ENCODE measurements at regions of chr5 and their contacts with region 1.

Region 1: DNA sequence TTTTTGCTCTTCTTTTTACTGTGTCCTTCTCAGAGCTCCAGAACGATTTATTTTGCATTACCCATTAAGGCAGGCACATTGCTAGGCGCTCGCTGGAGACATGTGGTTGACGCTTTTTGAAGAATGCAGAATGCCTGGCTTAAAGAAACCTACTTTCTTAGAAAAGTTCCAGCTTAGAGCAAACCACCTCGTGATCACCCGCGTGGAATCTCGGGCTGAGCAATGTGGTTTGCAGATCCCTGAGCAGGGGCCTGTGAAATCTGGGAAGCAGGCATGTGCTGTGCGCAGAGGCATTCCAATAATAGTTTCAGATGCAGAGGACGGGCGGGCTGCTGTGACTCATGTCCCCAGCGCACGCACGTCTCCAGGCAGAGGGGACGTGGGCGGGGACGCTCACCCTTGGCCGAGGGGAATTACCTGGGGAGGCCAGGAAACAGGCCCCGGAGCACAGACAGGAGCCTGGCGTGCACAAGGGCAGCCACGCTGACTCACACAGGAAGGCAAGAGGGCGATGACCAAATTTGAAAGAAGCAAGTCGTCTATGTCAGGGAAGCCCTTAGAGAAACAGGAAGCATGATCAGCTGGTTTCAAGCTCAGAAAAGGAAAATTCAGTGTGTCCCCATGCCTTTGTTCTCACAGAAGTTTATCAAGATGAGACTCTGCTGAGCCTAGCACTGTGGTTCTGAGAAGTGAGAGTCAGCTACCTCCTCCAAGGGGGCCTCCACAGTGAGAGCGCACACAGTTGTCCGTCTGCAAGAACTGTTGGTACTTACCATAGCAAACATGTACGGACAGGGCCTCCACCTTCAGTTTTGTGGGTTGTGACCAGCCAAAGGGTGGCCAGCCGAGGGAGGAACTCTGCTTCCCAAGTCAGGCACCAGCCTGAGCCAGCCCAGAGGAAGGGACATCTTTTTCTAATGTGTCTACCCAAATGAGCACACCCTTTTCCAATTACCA is 218.6 kb downstream of the PIK3R1 start:
- DNase-seq: peak; percentile 84
- H3K4me3 Mint-ChIP-seq: peak overlapping the region; percentile 39
- H3K27ac Mint-ChIP-seq: peak overlapping the region; percentile 64
- H3K4me1 Mint-ChIP-seq: peaks cover 45% of the 10 kb centered on the region
- H3K27me3 Mint-ChIP-seq: peaks cover 16% of the 10 kb centered on the region

Region 2: GRCh38 chr5:67215583-67216471 is 1218.4 kb before region 1 on chr5:
- intact Hi-C with region 1: loop called (anchors 5 kb)
- DNase-seq: peak; percentile 75
- H3K4me3 Mint-ChIP-seq: peak overlapping the region; percentile 73
- H3K27ac Mint-ChIP-seq: peak overlapping the region; percentile 97
- H3K4me1 Mint-ChIP-seq: peaks cover 55% of the 10 kb centered on the region
- H3K27me3 Mint-ChIP-seq: no peaks in the 10 kb centered on the region

Region 3: GRCh38 chr5:68287976-68288706 is 146.1 kb before region 1 on chr5:
- intact Hi-C with region 1: loop called (anchors 1 kb)
- DNase-seq: peak; percentile 42
- H3K4me3 Mint-ChIP-seq: peak overlapping the region; percentile 86
- H3K27ac Mint-ChIP-seq: peak overlapping the region; percentile 82
- H3K4me1 Mint-ChIP-seq: peaks cover 86% of the 10 kb centered on the region
- H3K27me3 Mint-ChIP-seq: no peaks in the 10 kb centered on the region

Region 4: DNA sequence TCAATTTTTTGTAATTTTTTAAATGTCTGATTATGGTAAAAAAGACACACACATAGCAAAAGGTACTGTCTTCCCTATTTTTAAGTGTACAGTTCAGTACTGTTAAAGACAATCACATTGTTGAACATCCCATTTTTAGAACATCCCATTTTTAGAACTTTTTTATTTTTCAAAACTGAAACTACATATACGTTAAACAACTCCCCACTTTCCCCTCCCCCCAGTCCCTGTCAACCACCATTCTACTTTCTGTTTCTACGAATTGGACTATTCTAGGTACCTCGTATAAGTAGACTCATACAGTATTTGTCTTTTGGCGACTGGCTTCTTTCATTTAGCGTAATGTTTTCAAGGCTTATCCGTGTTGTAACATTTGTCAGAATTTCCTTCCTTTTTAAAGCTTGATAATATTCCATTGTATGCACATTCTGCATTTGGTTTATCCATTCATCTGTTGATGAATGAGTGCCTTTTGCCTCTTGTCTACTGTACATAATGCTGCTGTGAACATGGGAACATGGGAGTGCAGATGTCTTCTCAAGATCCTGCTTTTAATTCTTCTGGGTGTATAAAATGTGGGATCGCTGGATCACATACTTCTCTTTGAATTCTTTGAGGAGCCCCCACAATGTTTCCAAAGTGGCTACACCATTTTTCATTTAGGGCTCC is 64.6 kb before region 1 on chr5:
- intact Hi-C with region 1: loop called (anchors 1 kb)
- DNase-seq: peak; percentile 54
- H3K4me3 Mint-ChIP-seq: peak overlapping the region; percentile 7
- H3K27ac Mint-ChIP-seq: peak overlapping the region; percentile 77
- H3K4me1 Mint-ChIP-seq: peaks cover 60% of the 10 kb centered on the region
- H3K27me3 Mint-ChIP-seq: no peaks in the 10 kb centered on the region

Region 5: GRCh38 chr5:68460147-68460798 is 26.1 kb after region 1 on chr5:
- intact Hi-C with region 1: loop called (anchors 1 kb)
- DNase-seq: no peak
- H3K4me3 Mint-ChIP-seq: no peak overlapping the region
- H3K27ac Mint-ChIP-seq: no peak overlapping the region
- H3K4me1 Mint-ChIP-seq: peaks cover 23% of the 10 kb centered on the region
- H3K27me3 Mint-ChIP-seq: peaks cover 2% of the 10 kb centered on the region

Measured in activated T-helper 2 cell treated with anti-CD3 and anti-CD28 coated beads, Interferon-gamma antibody, Interleukin-2, Interleukin-4, amounts not matched to agents 10 μg/mL and 5 μg/mL and 100 μg/mL, durations not matched to agents 14 hours and 24 hours and 36 hours (primary cell).